ENCODE measurements at regions of chrX and their contacts with region 1.

Region 1: GRCh38 chrX:69285881-69286564 is 120.8 kb upstream of the PJA1 start:
- H3K4me3 Mint-ChIP-seq: peak overlapping the region; percentile 54
- H3K27ac Mint-ChIP-seq: no peak overlapping the region
- H3K4me1 Mint-ChIP-seq: no peaks in the 10 kb centered on the region
- H3K27me3 Mint-ChIP-seq: peaks cover 11% of the 10 kb centered on the region

Region 2: DNA sequence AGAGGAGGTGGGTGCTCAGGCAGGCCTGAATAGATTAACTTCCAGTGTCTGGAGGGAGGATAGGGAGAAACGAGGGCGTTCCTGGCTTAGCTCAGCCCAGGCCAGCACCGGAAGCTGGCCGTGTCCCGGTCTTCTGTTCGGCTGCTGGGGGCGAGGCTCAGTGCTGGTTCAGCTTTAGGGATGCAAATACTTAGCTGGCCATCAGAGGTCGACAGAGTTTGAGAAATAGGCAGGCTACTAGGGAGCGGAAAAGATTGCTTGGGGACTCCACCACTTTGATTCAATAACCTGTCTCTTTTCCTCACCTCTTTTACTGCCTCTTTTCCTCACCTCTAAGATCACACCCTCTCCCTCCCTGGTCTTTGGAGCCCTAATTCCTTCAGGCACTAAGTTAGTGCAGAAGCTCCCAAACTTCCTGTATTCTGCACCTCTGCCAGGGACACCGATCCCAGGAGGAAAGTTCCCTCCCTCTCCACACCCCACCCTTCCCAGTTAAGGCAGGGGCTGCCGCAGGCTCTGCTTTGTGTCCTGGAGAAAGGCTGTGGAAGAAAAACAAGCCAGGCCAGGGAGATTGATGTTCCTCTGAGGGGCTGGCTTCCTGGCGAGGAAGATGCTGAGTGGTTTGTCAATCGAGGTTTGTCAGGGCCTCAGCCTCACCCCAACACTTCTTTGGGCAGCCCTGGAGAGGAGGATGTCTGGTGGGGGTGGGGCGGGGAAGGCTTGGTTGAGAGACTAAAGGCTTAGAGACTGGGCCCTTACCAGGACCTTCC is 463.2 kb before region 1 on chrX:
- intact Hi-C with region 1: loop called (anchors 5 kb)
- H3K4me3 Mint-ChIP-seq: no peak overlapping the region
- H3K27ac Mint-ChIP-seq: no peak overlapping the region
- H3K4me1 Mint-ChIP-seq: peaks cover 10% of the 10 kb centered on the region
- H3K27me3 Mint-ChIP-seq: peaks cover 15% of the 10 kb centered on the region

Region 3: DNA sequence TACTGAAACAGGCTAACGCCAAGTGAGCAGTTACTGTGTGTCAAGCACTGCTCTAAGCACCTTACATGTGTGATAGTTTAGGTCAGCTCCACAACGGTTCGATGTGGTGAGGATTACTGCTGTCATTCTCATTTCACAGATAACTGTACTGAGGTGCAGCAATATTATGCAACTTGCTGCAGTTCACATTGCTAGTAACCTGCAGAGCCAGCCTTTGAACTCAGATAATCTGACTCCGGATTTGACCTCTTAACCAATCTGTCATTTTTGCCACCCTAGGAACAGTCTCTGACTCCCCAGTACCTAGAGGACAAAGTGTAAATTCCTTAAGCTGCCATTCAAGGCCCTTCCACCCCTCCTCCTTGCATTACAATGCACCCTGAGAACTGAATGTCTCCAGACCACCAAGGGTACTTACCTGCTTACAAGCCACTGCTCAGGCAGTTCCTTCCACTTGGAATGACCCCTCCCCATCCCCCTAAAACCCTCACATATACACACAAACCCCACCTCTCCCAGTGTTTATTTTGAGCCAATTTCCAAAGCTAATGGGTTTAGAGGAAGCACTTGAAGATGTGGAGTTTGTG is 432.3 kb before region 1 on chrX:
- intact Hi-C with region 1: no loop called
- H3K4me3 Mint-ChIP-seq: no peak overlapping the region
- H3K27ac Mint-ChIP-seq: no peak overlapping the region
- H3K4me1 Mint-ChIP-seq: no peaks in the 10 kb centered on the region
- H3K27me3 Mint-ChIP-seq: peaks cover 6% of the 10 kb centered on the region

Region 4: DNA sequence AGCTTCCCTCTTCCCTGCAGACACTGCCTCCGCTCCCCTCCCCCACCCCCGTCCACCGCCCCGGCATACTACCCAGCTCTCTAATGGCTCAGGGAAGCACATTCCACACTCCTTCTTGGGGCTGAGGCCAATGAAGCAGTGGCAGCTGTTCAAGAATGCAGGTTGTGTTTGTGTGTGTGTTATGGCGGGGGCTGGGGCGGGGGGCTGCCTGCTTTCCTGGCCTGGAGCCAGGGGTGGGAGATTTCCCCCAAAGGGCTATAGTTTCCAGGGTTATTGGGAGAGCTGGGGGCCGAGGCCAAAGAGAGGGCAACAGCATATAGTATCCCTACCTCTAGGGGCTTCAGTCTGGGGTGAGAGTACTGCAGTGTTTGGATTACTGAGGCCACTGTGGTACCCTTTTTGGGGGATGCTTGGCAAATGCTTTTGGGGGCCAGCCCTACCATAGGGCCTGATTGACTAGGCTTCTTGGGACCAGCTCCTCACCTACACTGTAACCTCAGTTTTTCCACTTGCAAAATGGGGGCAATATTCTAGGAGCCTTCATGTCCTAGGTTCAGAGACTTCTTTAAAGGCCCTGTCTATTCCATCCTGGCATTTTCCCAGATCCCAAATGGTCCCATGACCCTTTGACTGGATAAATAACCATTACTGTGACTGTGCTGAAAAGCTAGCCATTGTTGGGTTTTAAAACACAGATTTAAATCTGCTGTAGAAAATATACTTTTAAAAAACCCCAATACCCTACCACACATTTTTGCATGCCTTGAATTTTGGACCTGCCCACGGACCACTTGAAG is 307.6 kb before region 1 on chrX:
- intact Hi-C with region 1: no loop called
- H3K4me3 Mint-ChIP-seq: no peak overlapping the region
- H3K27ac Mint-ChIP-seq: no peak overlapping the region
- H3K4me1 Mint-ChIP-seq: peaks cover 17% of the 10 kb centered on the region
- H3K27me3 Mint-ChIP-seq: peaks cover 2% of the 10 kb centered on the region

Region 5: DNA sequence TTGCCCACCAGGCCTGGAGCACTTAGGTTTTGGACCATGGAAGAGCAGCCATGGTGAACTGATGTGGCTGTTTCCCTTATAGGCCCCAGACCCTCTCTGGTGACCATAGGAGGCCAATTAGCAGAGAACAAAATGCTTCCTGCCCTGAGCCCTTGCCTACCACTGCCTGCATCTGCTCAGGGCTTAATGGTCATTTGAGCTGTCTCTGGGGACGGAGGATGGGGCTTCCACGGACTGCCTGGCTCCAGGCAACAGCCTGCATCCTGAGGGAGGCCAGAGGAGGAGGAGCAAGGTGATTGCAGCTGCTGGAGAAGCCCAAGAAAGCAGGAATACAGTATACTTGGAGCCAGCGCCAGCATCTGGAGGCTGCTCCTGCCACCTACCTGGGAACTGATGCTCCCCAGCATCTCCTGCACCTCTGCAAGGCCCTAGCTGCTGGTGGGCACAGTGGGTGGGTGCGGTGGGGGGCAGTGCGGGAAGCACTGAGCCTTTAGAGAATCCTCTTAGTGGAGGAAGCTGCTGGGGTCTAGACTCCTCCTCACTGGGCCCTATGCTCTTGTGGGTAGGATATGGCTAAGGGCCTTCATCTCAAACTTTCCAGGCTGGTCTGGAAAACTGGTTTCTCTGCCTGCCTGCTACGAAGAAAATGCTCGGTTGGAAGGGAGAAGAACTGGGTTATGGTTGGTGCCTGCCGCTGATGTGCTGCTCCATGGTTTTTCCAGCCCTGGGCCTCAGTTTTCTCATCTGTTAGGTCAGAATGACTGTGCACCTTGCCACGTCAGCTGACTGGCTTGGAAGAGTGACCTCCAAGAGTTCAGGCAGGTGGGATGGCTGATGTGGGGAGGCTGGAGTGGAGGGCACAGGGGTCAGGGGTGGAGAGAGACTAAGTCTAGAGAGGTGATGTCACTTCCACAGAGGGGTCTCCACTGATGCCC is 38.0 kb after region 1 on chrX:
- intact Hi-C with region 1: no loop called
- H3K4me3 Mint-ChIP-seq: no peak overlapping the region
- H3K27ac Mint-ChIP-seq: no peak overlapping the region
- H3K4me1 Mint-ChIP-seq: no peaks in the 10 kb centered on the region
- H3K27me3 Mint-ChIP-seq: no peaks in the 10 kb centered on the region

Measured in dendritic cell treated with granulocyte-macrophage colony-stimulating factor and Interleukin-4, amounts not matched to agents 40 ng/mL and 50 ng/mL, for 4 days (primary cell).